ENCODE measurements at regions of chr21 and their contacts with region 1.

Region 1: DNA sequence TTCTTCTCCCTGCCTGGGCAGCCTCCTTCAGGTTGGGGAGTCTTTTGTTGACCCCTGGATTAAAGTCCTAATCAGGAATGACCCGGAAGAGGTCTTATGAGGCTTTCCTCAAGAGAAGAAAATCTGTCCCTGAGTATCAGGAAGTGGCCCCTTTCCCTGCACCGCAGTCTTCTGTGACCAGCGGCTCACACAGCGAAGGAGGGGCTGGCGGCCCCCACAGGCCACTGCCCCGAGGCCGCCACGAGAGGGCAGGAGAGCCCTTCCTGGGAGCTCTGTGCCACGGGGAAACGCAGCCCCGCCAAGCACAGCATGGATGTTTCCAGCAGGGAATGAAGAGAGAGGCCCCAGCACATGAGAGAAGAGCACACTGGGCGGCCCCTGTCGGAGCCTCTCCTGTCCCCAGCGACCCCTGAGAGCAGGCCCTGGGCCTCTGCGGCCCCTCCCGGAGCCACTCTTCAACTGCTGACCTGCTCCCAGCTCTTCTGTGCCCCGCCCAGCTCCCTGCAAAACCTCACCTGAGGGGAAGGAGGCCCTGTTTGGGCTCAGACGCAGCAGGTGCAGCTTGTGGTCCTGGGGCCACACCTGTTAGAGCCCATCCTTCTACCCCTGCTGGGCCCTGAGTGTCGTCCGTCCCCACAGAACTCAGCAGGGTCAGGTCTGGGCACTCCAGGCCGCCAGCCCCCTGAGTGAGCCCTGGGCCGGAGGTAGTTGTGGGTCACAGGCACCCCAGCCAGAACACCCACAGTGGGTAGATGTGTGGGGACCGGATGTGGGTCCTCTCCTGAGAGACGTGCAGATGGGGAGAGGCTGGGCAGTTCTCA is 4.9 kb upstream of the POFUT2 start:
- DNase-seq: peak; percentile 93

Region 2: DNA sequence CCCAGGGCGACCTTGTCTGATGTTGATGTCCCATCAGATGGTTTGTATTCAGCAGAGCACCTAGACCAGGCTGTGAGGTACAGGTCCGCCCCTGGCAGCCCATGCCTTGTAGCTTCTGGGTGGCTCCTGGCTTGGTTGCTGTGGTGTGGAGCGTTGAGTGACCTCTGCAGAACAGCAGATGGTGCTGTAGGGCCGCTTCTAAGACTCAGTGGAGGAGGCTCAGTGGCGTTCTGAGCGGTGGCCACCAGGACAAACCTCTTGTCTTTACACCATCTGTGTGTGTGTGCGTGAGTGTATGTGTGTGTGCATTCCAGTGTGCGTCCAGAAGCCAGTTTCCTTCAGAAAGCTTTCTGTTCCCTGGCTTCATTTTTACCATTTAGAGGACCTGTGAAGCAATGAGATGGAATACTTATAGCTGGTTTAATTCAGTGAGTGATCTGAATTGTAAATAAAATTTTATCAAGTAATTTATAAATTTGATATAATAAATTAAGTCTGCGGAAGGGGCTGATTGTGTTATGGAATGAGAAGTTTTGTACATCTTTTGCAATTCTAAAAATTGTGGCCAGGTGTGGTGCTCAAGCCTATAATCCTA is 152.2 kb before region 1 on chr21:
- intact Hi-C with region 1: loop called (anchors 5 kb)
- DNase-seq: peak; percentile 82

Region 3: GRCh38 chr21:45363921-45364467 is 71.4 kb after region 1 on chr21:
- intact Hi-C with region 1: loop called (anchors 1 kb)
- DNase-seq: peak; percentile 92

Region 4: DNA sequence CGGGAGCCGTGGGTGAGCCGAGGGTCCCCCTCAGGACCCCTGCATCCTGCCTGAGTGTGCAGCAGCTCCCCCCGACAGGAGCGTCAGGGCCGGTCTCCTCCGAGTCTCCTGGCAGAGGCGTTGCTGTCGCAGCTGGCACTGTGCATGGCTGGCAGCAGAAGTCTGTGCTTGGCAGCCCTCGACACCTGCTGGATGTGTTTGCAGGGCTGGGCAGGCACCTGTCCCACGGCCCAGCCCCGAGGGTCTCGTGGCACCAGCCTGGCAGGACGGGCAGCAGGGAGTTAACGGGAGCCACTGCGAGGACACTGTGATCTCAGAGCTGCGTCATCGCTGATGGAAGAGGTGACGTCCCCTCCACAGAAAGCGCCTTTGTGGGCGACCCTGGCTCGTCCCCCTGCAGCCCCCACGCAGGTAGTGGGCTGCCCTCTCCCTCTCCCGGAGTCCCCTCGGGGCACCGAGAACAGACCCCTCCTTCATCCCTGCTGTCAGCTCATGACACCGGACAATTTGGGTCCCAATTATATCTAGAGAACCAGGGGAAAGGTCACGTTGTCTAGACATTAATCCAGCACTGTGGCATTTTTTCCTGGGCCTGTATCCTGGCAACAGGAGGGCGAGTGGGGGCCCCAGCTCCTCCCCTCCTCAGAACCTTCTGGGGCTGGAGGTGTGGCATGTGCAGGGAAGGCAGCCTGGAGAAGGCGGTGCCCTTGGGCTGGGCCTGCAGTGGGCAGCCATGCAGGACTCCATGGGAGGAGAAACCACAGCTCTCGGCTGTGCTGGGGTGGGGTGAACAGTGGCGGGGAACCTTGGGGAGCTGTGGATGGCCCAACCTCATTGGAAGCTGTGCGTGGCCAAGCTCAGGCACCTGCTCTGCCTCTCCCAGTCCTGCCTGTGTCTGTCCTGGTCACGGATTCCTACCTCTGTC is 127.7 kb after region 1 on chr21:
- intact Hi-C with region 1: no loop called
- DNase-seq: no peak

Region 5: DNA sequence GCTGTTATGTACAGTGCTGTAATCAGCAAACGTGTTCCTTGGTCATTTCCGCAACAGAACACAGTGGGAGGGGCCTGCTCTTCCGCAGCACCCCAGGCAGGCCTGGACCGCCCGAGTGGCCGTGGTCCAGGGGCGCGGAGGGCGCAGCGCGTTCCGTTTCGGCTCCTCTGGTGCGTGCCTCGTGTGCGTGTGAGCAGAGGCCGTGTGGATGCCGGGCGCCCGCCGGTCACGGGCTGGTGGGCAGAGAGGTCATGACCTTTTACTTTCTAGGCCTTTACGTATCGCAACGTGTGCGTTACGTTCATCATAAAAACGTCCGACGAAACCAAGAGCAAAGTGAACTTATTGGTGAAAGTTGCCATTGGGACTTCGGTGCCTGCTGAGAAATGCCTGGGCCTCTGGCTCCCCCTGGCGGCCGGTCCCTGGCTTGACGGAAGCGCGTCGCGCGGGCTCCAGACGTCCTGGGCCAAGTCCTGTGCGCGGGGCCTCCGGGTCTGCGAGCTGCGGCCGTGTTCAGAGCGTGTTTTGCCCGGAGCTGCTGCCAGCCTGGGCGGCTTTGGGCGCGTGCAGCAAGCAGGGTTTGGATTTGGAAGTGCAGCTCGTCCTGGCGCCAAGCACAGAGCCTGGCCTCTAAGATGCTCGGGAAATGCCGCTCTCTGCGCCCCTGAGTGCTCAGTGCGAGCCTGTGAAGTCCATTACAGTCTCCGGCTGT is 146.7 kb after region 1 on chr21:
- intact Hi-C with region 1: loop called (anchors 1 kb)
- DNase-seq: peak; percentile 93

Region 6: DNA sequence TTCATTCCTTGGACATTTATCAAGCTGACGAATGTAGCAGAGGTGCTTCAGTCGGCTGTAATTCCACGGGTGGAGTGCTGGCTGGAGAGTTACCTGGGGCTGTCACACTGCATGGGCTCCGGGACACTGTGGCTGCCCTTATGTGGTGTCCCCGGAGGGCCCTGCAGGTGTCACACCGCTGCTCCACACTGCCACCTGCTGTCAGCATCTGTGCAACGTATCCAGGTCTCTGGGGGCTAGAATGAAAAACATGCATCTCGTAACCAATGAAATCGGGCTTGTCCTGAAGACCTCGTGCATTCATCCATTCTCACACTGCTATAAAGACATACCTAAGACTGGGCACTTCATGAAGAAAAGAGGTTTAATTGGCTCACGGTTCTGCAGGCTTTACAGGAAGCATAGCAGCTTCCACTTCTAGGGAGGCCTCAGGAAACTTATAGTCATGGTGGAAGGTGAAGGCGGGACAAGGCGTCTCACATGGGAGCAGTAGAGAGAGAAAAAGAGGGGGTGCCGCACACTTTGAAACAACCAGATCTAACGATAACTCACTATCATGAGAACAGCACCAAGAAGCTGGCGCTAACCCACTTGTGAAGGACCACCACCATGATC is 304.2 kb after region 1 on chr21:
- intact Hi-C with region 1: loop called (anchors 10 kb)
- DNase-seq: peak; percentile 86

Region 7: DNA sequence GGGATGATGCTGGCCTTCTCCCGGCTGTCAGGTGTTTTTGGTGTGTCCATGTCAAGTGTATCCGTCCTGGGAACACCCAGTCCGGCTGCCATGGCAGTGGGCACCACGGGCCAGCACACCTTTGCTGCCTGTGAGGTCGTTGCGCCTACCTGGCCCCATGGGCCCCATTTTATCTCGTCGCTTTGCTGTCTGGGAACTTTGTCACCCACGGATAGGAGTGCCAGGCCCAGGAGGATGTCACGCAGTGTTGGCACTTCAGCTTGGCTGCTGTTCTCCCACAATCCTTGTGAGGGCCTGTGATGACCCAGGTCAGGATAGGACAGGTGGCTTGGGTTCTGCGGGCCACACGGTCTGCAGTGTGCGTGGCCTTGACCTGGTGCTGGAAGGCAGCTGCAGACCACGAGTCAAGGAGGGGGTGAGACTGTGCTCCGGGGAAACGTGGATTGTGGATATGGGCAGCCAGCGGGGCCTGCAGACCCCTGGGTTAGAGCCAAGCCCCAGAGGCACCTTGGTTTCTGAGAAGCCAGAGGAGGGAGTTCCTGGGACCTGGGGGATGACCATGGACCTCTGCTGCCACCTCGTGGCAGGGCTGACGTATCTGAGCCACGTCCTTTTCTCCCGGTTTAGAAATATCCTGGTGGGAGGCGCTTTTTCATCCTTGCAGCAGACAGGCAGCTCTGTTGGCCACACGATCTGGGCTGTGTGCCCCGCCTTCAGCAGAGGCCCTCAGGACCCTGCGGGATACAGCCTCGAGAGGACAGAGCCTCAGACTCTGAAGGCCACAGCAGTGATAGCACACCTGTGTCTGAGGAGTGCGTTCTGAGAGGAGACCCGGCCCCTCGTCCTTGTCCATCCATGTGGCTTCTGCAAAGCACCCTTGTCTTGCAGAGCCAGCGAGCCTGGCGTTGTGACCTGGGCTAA is 527.8 kb after region 1 on chr21:
- intact Hi-C with region 1: loop called (anchors 5 kb)
- DNase-seq: peak; percentile 86